ENCODE measurements at regions of chr2 and their contacts with region 1.

Region 1: DNA sequence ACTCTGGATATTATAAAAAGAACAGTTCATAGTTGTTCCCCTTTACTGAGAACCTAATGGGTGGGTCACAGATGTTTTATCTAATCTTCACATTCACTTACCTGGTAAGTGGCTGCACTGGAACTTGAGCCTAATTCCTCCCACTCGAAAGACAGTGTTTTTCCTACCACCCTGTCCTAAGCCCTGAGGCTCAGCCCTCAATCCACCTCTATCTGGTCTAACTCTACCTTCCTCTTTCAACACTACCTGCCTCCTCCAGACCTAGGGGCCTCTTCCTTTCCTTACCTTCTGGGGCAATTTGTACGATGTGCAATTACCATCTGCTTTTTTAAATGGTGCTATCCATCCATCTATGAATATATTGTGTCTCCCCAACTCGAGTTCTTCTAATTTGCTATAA is 9.7 kb upstream of the KIF3C start:
- DNase-seq: no peak
- H3K4me3 ChIP-seq: no peak overlapping the region
- H3K27ac ChIP-seq: peak overlapping the region; percentile 47
- H3K4me1 ChIP-seq: peaks cover 10% of the 10 kb centered on the region
- H3K27me3 ChIP-seq: no peaks in the 10 kb centered on the region
- CTCF ChIP-seq: no peak

Region 2: DNA sequence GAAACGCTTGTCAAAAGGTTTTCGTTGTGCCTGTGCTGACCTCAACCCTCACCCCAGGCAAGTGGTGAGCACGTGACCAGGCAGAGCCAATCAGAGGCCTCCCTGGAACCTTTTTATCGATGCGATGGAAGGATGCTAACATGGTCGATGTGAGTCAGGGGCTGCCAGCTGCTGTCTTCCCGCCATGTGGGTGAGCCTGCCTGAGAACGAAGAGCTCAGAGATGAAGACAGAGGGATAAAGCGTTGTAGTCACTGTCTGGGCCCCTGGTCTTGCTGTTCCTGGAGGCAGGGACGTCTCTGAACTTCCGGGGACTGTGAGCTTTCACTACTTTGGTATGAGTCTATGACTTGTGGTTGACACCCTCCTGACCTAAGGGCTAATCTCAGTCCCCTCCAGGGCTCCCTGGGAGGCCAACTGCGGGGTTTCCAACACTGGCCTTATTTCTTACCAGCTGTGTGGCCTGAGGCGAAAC is 668.9 kb before region 1 on chr2:
- CTCF ChIA-PET with region 1: no interaction called
- dilution Hi-C with region 1: no loop called
- in situ Hi-C with region 1: no loop called
- intact Hi-C with region 1: no loop called
- DNase-seq: no peak
- H3K4me3 ChIP-seq: no peak overlapping the region
- H3K27ac ChIP-seq: no peak overlapping the region
- H3K4me1 ChIP-seq: no peaks in the 10 kb centered on the region
- H3K27me3 ChIP-seq: no peaks in the 10 kb centered on the region
- CTCF ChIP-seq: no peak

Region 3: DNA sequence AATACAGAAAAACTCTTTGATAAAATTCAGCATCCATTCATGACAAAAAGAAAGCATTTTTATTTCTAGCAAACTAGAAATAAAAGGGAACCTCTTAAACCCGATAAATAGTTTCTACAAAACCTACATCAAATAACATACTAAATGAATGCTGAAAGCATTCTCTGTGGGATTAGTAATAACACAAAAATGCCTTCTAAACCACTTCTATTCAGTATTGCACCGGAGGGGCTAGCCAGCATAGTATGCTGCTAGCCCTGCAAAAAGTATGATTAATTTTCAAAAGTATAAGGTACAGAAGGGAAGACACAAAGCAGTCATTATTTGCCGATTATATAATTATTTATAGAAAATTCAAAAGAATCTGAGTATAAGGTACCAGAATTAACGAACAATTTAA is 463.8 kb before region 1 on chr2:
- CTCF ChIA-PET with region 1: no interaction called
- dilution Hi-C with region 1: no loop called
- in situ Hi-C with region 1: no loop called
- intact Hi-C with region 1: no loop called
- DNase-seq: peak; percentile 75
- H3K4me3 ChIP-seq: peak overlapping the region in 1 of 3 experiments; percentile 37
- H3K27ac ChIP-seq: peak overlapping the region; percentile 51
- H3K4me1 ChIP-seq: peaks cover 13% of the 10 kb centered on the region
- H3K27me3 ChIP-seq: no peaks in the 10 kb centered on the region
- CTCF ChIP-seq: no peak

Region 4: DNA sequence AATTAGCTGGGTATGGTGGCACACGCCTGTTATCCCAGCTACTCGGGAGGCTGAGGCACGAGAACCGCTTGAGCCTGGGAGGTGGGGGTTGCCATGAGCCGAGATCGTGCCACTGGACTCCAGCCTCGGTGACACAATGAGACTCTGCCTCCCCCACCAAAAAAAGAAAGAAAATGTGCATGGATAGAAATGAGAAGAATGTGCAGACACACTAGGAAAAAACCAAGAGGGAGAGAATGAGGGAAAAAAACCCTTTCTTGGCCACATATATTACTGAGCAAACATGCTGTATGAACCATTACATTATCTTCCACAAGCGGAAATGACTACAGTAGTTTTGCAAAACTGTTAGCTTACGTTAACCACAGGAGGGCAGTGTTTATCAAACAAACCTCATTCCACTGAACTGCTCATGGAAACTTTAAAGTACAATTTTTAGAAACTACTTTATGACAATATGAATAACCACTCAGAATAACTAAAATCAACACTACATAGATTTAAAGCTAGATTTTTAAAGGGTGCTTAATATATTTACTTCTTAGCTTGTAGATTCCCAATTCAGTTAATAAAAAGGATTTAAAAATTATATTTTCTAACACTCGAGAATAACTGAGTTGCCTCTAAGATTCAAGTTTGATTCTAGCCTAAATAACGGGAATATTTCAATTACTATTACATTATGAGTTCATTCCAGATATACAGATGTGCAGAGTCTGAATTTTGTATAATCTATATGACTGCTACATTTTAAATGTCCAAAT is 140.0 kb before region 1 on chr2:
- CTCF ChIA-PET with region 1: no interaction called
- dilution Hi-C with region 1: no loop called
- in situ Hi-C with region 1: no loop called
- intact Hi-C with region 1: loop called (anchors 5 kb)
- DNase-seq: peak; percentile 70
- H3K4me3 ChIP-seq: no peak overlapping the region
- H3K27ac ChIP-seq: peak overlapping the region; percentile 7
- H3K4me1 ChIP-seq: peaks cover 7% of the 10 kb centered on the region
- H3K27me3 ChIP-seq: no peaks in the 10 kb centered on the region
- CTCF ChIP-seq: peak; percentile 67 to 72

Region 5: GRCh38 chr2:25894135-25894830 is 97.7 kb before region 1 on chr2:
- CTCF ChIA-PET with region 1: no interaction called
- dilution Hi-C with region 1: no loop called
- in situ Hi-C with region 1: no loop called
- intact Hi-C with region 1: no loop called
- DNase-seq: no peak
- H3K4me3 ChIP-seq: no peak overlapping the region
- H3K27ac ChIP-seq: no peak overlapping the region
- H3K4me1 ChIP-seq: no peaks in the 10 kb centered on the region
- H3K27me3 ChIP-seq: no peaks in the 10 kb centered on the region
- CTCF ChIP-seq: no peak

Region 6: GRCh38 chr2:26033818-26034636 is 42.1 kb after region 1 on chr2 and contains the start of gene RAB10:
- CTCF ChIA-PET with region 1: no interaction called
- dilution Hi-C with region 1: no loop called
- in situ Hi-C with region 1: loop called in 1 of 2 experiments (anchors 5 kb)
- intact Hi-C with region 1: loop called (anchors 1 kb)
- DNase-seq: peak; percentile 100
- H3K4me3 ChIP-seq: peak within 1 kb of the TSS; percentile 80 to 94 (median 92)
- H3K27ac ChIP-seq: peak within 1 kb of the TSS; percentile 96
- H3K4me1 ChIP-seq: peaks cover 10% of the 10 kb centered on the region
- H3K27me3 ChIP-seq: no peaks in the 10 kb centered on the region
- CTCF ChIP-seq: no peak
- total RNA-seq, gene RAB10: 127 to 188 TPM

Region 7: GRCh38 chr2:26088032-26088643 is 96.2 kb after region 1 on chr2:
- CTCF ChIA-PET with region 1: no interaction called
- dilution Hi-C with region 1: no loop called
- in situ Hi-C with region 1: no loop called
- intact Hi-C with region 1: loop called (anchors 5 kb)
- DNase-seq: no peak
- H3K4me3 ChIP-seq: no peak overlapping the region
- H3K27ac ChIP-seq: no peak overlapping the region
- H3K4me1 ChIP-seq: peaks cover 6% of the 10 kb centered on the region
- H3K27me3 ChIP-seq: no peaks in the 10 kb centered on the region
- CTCF ChIP-seq: peak; percentile 67 to 74

Region 8: DNA sequence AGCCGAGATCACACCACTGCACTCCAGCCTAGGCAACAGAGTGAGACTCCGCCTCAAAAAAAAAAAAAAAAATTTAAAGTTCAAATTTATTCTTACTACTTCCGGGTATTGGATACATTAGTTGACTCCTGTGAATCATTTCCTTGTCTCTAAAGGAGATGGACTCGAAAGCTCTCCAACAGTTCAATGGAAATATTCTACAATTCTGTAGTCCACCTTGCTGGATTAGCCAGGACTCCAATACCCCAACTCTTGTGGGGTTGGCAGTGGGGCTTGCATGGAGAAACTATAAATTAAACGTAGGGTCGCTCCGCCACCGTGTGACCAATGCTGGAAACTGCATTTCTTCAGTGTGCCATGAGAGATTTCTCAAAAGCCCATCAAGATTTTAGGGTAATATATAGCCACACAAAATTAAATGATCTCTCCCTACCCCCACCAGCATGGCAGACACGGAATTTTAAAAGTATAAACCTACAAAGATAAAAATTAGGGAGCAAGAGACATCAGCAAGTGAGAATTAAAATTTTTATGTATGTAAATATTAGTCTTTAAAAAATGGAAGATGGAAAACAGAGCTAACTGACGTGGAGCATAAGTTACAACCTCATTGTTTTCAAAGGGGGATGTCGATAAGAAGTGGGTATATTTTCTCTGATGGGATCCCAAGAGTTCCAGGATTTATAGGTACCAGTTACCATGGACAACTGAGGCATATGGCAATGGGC is 153.2 kb after region 1 on chr2:
- CTCF ChIA-PET with region 1: interaction called, 10 read pairs
- dilution Hi-C with region 1: no loop called
- in situ Hi-C with region 1: loop called (anchors 10 kb)
- intact Hi-C with region 1: loop called (anchors 1 kb)
- DNase-seq: peak; percentile 39
- H3K4me3 ChIP-seq: no peak overlapping the region
- H3K27ac ChIP-seq: no peak overlapping the region
- H3K4me1 ChIP-seq: no peaks in the 10 kb centered on the region
- H3K27me3 ChIP-seq: no peaks in the 10 kb centered on the region
- CTCF ChIP-seq: peak; percentile 69 to 77